ENCODE measurements at regions of chr2 and their contacts with region 1.

Region 1: GRCh38 chr2:205925373-205926337 is 160.3 kb downstream of the INO80D start:
- DNase-seq: peak; percentile 75 to 82
- ATAC-seq: peak; percentile 88 to 97 (median 92)
- H3K4me3 ChIP-seq: peak overlapping the region in 6 of 10 donors; percentile 9 to 41 (median 26)
- H3K27ac ChIP-seq: peak overlapping the region in 1 of 10 donors; percentile 55
- H3K4me1 ChIP-seq: peaks cover 1 to 24% (median 13%) of the 10 kb centered on the region in 9 donors
- H3K27me3 ChIP-seq: peaks cover 0 to 47% (median 24%) of the 10 kb centered on the region in 7 donors
- CTCF ChIP-seq: peak; percentile 81 to 98 (median 95)

Region 2: GRCh38 chr2:204145263-204145751 is 1780.3 kb before region 1 on chr2:
- intact Hi-C with region 1: loop called in 1 of 10 experiments (anchors 5 kb)
- DNase-seq: peak; percentile 74 to 79
- ATAC-seq: peak; percentile 87 to 98 (median 96)
- H3K4me3 ChIP-seq: peak overlapping the region; percentile 14 to 59 (median 44)
- H3K27ac ChIP-seq: peak overlapping the region in 6 of 10 donors; percentile 28 to 66 (median 53)
- H3K4me1 ChIP-seq: peaks cover 0 to 11% (median 6%) of the 10 kb centered on the region in 9 donors
- H3K27me3 ChIP-seq: peaks cover 0 to 5% (median 0%) of the 10 kb centered on the region in 7 donors
- CTCF ChIP-seq: peak in 8 of 9 donors; percentile 89 to 98 (median 96)

Region 3: GRCh38 chr2:204251158-204251997 is 1674.3 kb before region 1 on chr2:
- intact Hi-C with region 1: loop called in 2 of 10 experiments (anchors 10 kb)
- DNase-seq: no peak
- ATAC-seq: no peak
- H3K4me3 ChIP-seq: no peak overlapping the region
- H3K27ac ChIP-seq: no peak overlapping the region
- H3K4me1 ChIP-seq: peaks cover 0 to 9% (median 0%) of the 10 kb centered on the region in 9 donors
- H3K27me3 ChIP-seq: peaks cover 0 to 3% (median 0%) of the 10 kb centered on the region in 7 donors
- CTCF ChIP-seq: no peak

Region 4: GRCh38 chr2:204325468-204325867 is 1600.2 kb before region 1 on chr2:
- intact Hi-C with region 1: loop called in 7 of 10 experiments (anchors 5 to 10 kb)
- DNase-seq: peak in 1 of 2 donors; percentile 76
- ATAC-seq: peak in 6 of 8 donors; percentile 35 to 64 (median 56)
- H3K4me3 ChIP-seq: no peak overlapping the region
- H3K27ac ChIP-seq: no peak overlapping the region
- H3K4me1 ChIP-seq: peaks cover 0 to 35% (median 5%) of the 10 kb centered on the region in 9 donors
- H3K27me3 ChIP-seq: peaks cover 0 to 6% (median 0%) of the 10 kb centered on the region in 7 donors
- CTCF ChIP-seq: peak; percentile 81 to 92 (median 89)

Region 5: DNA sequence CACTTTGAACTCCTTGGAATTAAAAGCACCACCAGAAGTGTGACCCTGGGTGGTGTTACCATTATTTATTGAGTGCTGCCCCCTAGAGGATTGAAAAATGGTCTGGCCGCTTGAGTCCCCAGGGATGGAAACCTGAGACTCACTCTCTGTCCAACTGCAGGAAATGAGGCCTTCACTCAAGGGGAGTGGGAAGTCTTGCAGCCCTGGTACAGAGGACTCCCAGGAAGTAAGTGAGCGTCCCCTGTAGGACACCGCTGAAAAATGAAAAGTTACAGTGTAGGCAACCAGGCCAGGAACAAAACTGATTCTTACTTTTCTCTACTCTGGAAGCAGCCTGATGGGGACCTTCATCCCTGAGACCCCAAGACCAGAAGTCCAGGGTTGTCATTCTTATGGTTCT is 245.6 kb before region 1 on chr2:
- intact Hi-C with region 1: loop called in 1 of 10 experiments (anchors 10 kb)
- DNase-seq: peak in 1 of 2 donors; percentile 74
- ATAC-seq: peak in 7 of 8 donors; percentile 19 to 41 (median 21)
- H3K4me3 ChIP-seq: no peak overlapping the region
- H3K27ac ChIP-seq: no peak overlapping the region
- H3K4me1 ChIP-seq: peaks cover 4 to 40% (median 24%) of the 10 kb centered on the region in 9 donors
- H3K27me3 ChIP-seq: peaks cover 0 to 47% (median 19%) of the 10 kb centered on the region in 7 donors
- CTCF ChIP-seq: peak; percentile 42 to 79 (median 69)

Region 6: DNA sequence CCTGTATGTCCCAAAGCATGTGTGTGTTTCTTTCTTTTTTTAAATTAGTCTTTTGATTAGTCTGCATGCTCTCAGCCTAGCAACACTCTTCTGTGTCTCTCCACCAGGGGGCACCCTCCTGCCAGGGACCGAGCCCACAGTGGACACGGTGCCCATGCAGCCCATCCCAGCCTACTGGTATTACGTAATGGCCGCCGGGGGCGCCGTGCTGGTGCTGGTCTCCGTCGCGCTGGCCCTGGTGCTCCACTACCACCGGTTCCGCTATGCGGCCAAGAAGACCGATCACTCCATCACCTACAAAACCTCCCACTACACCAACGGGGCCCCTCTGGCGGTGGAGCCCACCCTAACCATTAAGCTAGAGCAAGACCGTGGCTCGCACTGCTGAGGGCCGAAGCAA is 149.5 kb before region 1 on chr2:
- intact Hi-C with region 1: loop called in 2 of 10 experiments (anchors 5 to 10 kb)
- DNase-seq: peak; percentile 37 to 41
- ATAC-seq: peak in 7 of 8 donors; percentile 49 to 80 (median 74)
- H3K4me3 ChIP-seq: no peak overlapping the region
- H3K27ac ChIP-seq: no peak overlapping the region
- H3K4me1 ChIP-seq: no peaks in the 10 kb centered on the region
- H3K27me3 ChIP-seq: peaks cover 0 to 11% (median 0%) of the 10 kb centered on the region in 7 donors
- CTCF ChIP-seq: peak; percentile 30 to 75 (median 64)

Region 7: GRCh38 chr2:206011795-206012194 is 86.1 kb after region 1 on chr2:
- intact Hi-C with region 1: no loop called
- DNase-seq: no peak
- ATAC-seq: no peak
- H3K4me3 ChIP-seq: no peak overlapping the region
- H3K27ac ChIP-seq: no peak overlapping the region
- H3K4me1 ChIP-seq: peaks cover 0 to 3% (median 0%) of the 10 kb centered on the region in 9 donors
- H3K27me3 ChIP-seq: no peaks in the 10 kb centered on the region
- CTCF ChIP-seq: no peak